ENCODE measurements at regions of chr6 and their contacts with region 1.

Region 1: DNA sequence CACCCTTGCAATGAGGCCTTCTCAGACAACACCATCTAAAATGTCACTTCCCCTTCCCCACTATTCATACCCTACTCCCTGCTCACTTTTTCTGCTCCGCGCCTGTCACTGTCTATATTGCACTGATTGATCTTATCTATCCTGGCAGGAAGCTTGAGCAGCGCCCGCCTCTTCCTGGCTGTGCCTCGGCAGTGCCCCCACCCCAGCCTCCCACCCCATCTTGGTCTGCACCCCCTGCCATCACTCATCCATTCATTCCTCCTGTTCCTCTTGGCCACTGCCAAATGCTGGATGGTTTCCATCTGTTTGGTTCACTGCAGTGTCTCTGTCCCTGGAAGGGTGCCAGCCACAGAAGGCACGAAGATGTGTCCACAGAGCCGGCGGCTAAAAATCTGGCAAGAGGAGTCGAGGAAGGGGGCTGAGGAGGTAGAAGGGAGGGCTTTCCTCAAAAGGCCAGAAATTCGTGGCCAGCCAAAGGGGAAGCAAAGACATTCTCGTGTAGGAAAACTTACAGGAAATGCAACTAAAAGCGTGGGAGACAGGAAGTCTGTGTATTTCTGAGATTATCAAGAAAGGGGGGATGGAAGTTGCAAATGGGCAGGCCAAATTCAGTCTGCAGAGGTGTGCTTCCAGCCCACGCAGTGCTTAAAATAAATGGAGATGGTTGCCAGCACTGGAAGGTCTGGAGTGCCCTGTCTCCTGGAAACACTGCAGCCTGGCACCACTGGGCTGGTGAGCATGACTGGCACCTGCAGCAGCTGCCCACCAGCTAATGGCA is 27.6 kb downstream of the SYNJ2 start:
- DNase-seq: no peak
- ATAC-seq: no peak
- H3K4me3 ChIP-seq: no peak overlapping the region
- H3K27ac ChIP-seq: peak overlapping the region; percentile 99
- H3K4me1 ChIP-seq: peaks cover 99% of the 10 kb centered on the region
- H3K27me3 ChIP-seq: no peaks in the 10 kb centered on the region
- CTCF ChIP-seq: no peak
- EP300 ChIP-seq: no peak
- POLR2A ChIP-seq: no peak
- RAD21 ChIP-seq: no peak

Region 2: GRCh38 chr6:157514659-157515496 is 494.4 kb before region 1 on chr6:
- CTCF ChIA-PET with region 1: no interaction called
- POLR2A ChIA-PET with region 1: no interaction called
- in situ Hi-C with region 1: no loop called
- intact Hi-C with region 1: no loop called
- DNase-seq: peak; percentile 75
- ATAC-seq: peak; percentile 61
- H3K4me3 ChIP-seq: no peak overlapping the region
- H3K27ac ChIP-seq: peak overlapping the region; percentile 22
- H3K4me1 ChIP-seq: peaks cover 83% of the 10 kb centered on the region
- H3K27me3 ChIP-seq: no peaks in the 10 kb centered on the region
- CTCF ChIP-seq: no peak
- EP300 ChIP-seq: peak in 1 of 2 experiments; percentile 53; a peak in 1 of 4 replicates
- POLR2A ChIP-seq: no peak
- RAD21 ChIP-seq: no peak

Region 3: DNA sequence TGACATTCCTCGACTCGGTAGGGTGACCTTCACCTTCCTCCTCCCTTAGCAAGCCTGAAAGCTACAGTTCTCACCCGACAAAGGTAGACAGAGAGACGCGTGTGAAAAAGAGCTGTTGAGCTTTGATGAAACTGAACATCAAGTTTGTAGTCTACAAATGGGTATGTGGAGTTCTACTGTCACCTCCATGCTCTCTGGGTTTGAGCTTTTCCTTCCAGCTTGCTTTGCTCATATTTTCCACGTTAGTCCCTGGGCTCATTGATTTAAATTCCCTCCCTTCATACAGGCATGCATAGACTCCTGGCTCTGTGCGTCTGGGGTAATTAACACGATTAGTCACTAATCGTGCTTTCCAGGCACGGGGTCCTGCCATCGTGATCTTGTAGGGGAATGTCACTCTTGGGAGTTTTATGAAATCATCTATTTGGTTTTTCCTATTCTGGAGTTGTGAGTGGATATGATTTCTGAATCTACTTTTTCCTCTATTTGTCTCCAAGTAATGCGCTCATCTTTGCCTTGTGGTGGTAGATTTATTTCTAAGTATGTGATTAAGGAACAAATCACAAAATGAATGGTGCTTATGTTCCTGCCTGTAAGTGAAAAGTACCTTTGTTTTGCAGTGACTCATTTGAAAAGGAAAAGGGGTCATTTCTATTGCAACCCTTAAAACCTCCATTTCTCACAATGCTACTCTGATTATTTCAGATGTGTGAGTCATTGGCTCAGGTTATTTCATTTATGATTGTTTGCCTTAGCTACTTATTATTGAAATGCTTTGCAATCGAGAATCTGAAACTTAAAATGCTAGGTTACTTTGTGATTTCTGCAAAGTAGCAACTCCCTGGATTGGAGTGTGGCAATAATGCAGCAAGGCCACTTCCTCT is 473.7 kb before region 1 on chr6:
- CTCF ChIA-PET with region 1: no interaction called
- POLR2A ChIA-PET with region 1: no interaction called
- in situ Hi-C with region 1: no loop called
- intact Hi-C with region 1: no loop called
- DNase-seq: peak; percentile 86
- ATAC-seq: no peak
- H3K4me3 ChIP-seq: peak overlapping the region in 2 of 3 experiments; percentile 19; a peak in 3 of 6 replicates
- H3K27ac ChIP-seq: peak overlapping the region; percentile 64
- H3K4me1 ChIP-seq: peaks cover 100% of the 10 kb centered on the region
- H3K27me3 ChIP-seq: no peaks in the 10 kb centered on the region
- CTCF ChIP-seq: no peak
- EP300 ChIP-seq: no peak
- POLR2A ChIP-seq: peak in 1 of 2 experiments; percentile 40; a peak in 1 of 4 replicates
- RAD21 ChIP-seq: no peak

Region 4: DNA sequence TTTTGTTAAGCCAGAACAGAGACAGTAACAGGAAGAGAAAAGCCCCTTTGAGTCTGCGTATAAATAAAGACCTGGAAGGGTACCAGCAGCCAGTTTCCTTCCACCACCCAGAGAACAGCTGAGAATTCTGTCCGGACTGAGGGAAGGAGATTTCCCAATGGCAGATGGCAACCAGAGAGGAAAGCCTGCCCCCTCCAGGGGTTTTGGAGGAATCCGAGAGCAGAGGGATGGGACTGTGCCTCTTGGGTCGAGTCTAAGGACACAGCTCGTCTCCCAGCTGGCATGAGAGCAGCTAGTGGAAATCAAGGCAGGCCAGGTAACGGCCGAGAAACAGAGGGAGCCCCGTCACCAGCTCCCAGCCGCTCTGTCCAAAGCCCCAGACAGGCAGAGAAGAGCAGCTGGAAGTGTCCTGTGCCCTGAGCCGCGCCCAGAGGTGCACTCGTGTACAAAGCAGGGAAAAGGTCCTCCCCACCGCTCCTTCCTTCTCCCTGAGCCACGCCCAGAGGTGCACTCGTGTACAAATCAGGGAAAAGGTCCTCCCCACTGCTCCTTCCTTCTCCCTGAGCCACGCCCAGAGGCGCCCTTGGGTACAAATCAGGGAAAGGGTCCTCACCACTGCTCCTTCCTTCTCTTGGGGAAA is 320.2 kb before region 1 on chr6:
- CTCF ChIA-PET with region 1: no interaction called
- POLR2A ChIA-PET with region 1: no interaction called
- in situ Hi-C with region 1: no loop called
- intact Hi-C with region 1: no loop called
- DNase-seq: no peak
- ATAC-seq: peak; percentile 53
- H3K4me3 ChIP-seq: 0 out of 6 replicates have a peak overlapping the region, but pooled peaks of 1 of the 3 experiments have one; percentile 6
- H3K27ac ChIP-seq: no peak overlapping the region
- H3K4me1 ChIP-seq: no peaks in the 10 kb centered on the region
- H3K27me3 ChIP-seq: peaks cover 5 to 48% of the 10 kb centered on the region in 2 experiments; a peak in 3 of 5 replicates
- CTCF ChIP-seq: peak; percentile 46
- EP300 ChIP-seq: no peak
- POLR2A ChIP-seq: no peak
- RAD21 ChIP-seq: no peak

Region 5: DNA sequence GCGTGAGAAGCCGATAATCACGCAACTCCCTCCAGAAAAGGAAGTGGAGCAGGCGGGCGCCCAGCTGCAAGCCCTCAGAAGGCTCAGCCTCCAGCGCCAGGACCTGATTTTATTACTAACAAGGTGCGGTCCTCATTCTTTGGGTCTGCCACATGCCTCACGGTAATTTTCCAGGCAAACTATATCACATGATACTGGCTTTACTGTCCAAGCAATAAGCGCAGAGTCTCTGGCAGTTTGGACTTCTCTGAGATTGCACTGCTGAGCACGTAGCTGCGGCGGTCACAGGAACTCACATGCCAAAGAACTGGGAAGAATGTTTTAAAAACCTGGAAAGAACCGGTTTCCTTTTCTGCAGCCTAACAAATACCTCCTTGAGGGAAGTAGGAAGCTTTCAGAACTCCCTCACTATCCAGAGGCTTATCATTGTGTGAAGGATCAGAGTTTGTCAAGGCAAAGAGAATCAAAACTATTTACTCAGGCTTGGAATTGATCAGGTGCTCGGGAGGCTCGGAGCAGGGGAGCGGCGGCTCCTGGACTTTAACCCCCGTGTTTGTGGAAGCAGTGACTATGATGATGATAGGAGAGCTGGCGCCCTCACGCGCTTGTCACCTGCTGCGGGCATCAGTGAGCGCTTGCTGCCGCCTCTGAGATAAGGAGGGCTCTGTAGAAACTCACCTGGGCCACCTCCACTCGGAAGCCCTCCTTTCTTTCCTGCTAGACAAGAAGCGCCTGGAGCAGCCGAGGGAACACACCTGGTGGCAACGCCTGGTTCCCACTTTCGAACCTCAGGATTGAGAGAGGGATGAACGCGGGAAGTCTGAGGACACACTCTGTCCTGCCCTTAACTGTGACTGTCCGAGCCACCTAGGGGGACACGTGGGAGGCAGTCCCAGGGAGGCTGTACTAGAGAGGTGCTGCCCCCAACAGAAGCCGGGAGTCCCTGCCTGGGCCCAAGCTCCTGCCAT is 54.9 kb before region 1 on chr6:
- CTCF ChIA-PET with region 1: no interaction called
- POLR2A ChIA-PET with region 1: interaction called, 36 read pairs
- in situ Hi-C with region 1: no loop called
- intact Hi-C with region 1: no loop called
- DNase-seq: peak; percentile 95
- ATAC-seq: peak; percentile 88
- H3K4me3 ChIP-seq: peak overlapping the region; percentile 49 to 72 (median 54)
- H3K27ac ChIP-seq: peak overlapping the region; percentile 87
- H3K4me1 ChIP-seq: peaks cover 50% of the 10 kb centered on the region
- H3K27me3 ChIP-seq: no peaks in the 10 kb centered on the region; a peak in 1 of 5 replicates
- CTCF ChIP-seq: peak; percentile 87
- EP300 ChIP-seq: peak in 1 of 2 experiments; percentile 86; a peak in 3 of 4 replicates
- POLR2A ChIP-seq: peak; percentile 33 to 74; a peak in 3 of 4 replicates
- RAD21 ChIP-seq: peak; percentile 80

Region 6: GRCh38 chr6:157994126-157994795 is 15.0 kb before region 1 on chr6:
- CTCF ChIA-PET with region 1: no interaction called
- POLR2A ChIA-PET with region 1: interaction called, 345 read pairs
- in situ Hi-C with region 1: no loop called
- intact Hi-C with region 1: no loop called
- DNase-seq: peak; percentile 69
- ATAC-seq: peak; percentile 8; the same call in 2 of the 3 replicates
- H3K4me3 ChIP-seq: no peak overlapping the region
- H3K27ac ChIP-seq: peak overlapping the region; percentile 49
- H3K4me1 ChIP-seq: peaks cover 96% of the 10 kb centered on the region
- H3K27me3 ChIP-seq: no peaks in the 10 kb centered on the region
- CTCF ChIP-seq: no peak
- EP300 ChIP-seq: no peak
- POLR2A ChIP-seq: no peak
- RAD21 ChIP-seq: no peak

Region 7: DNA sequence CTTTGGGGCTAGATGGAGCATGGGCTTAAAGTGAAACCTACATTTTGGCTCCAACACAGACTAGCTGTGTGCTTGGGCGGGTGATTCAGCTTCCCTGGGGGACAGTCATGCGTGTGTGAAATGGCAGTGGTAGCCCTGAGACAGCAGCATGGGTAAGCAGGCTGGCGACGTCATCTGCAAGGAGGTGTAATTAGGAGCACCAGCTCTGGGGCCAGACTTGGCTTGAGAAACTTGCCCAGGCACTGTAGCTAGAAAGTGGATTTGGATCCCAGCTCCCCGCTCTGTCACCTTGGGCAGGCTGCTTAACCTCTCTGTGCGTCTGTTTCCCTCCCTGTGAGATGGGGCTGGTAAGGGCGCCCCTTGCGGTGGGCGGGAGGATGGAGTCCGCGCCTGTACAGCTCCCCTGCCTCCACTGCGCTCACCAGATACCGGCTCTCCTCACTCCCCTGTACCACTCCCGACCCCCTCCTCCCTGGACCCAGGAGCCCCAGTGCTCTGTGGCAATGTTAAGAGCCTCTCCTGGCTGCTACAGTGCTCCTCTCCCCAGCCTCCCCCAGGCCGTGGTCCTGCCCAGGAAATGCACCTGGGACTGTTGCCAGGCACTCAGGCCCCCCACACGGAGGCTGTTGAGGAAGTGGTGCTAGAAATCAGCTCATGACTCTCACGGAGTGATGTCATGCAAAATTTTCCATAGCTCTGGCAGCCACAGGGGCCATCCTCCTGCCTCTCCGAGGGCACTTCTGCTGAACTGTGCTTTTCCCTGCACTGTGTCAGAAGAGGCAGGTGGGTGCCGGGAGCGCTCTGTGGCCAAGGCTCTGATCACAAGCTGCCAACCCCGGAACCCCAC is 17.0 kb after region 1 on chr6:
- CTCF ChIA-PET with region 1: no interaction called
- POLR2A ChIA-PET with region 1: interaction called, 75 read pairs
- in situ Hi-C with region 1: no loop called
- intact Hi-C with region 1: no loop called
- DNase-seq: peak; percentile 83
- ATAC-seq: peak; percentile 46
- H3K4me3 ChIP-seq: no peak overlapping the region
- H3K27ac ChIP-seq: peak overlapping the region; percentile 50
- H3K4me1 ChIP-seq: peaks cover 69% of the 10 kb centered on the region
- H3K27me3 ChIP-seq: no peaks in the 10 kb centered on the region
- CTCF ChIP-seq: peak; percentile 12; the same call in 1 of the 2 replicates
- EP300 ChIP-seq: peak in 1 of 2 experiments; percentile 66; a peak in 1 of 4 replicates
- POLR2A ChIP-seq: 0 out of 4 replicates have a peak, but pooled peaks of 1 of the 2 experiments have one; percentile 40
- RAD21 ChIP-seq: no peak

Region 8: GRCh38 chr6:158047127-158047518 is 37.8 kb after region 1 on chr6:
- CTCF ChIA-PET with region 1: no interaction called
- POLR2A ChIA-PET with region 1: interaction called, 65 read pairs
- in situ Hi-C with region 1: no loop called
- intact Hi-C with region 1: loop called (anchors 1 kb)
- DNase-seq: no peak
- ATAC-seq: no peak
- H3K4me3 ChIP-seq: no peak overlapping the region
- H3K27ac ChIP-seq: peak overlapping the region; percentile 5
- H3K4me1 ChIP-seq: peaks cover 79% of the 10 kb centered on the region
- H3K27me3 ChIP-seq: no peaks in the 10 kb centered on the region
- CTCF ChIP-seq: no peak
- EP300 ChIP-seq: no peak
- POLR2A ChIP-seq: no peak
- RAD21 ChIP-seq: no peak

Region 9: DNA sequence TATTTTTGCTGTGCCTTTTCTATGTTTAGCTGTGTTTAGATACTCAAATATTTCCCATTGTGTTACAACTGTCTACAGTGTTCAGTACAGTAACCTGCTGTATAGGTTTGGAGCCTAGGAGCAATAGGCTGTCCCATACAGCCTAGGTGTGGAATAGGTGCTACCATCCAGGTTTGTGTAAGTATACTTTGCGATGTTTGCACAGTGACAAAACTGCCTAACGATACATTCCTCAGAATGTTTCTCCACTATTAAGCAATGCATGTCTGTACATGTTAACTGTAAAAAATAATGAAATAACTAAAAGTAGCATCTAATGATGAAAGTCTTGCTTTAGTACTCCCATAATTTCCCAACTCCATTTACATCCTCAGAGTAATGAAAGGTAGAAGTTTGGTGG is 112.7 kb after region 1 on chr6:
- CTCF ChIA-PET with region 1: no interaction called
- POLR2A ChIA-PET with region 1: no interaction called
- in situ Hi-C with region 1: no loop called
- intact Hi-C with region 1: no loop called
- DNase-seq: peak; percentile 56
- ATAC-seq: peak; percentile 64
- H3K4me3 ChIP-seq: no peak overlapping the region
- H3K27ac ChIP-seq: no peak overlapping the region
- H3K4me1 ChIP-seq: peaks cover 10% of the 10 kb centered on the region
- H3K27me3 ChIP-seq: no peaks in the 10 kb centered on the region
- CTCF ChIP-seq: no peak
- EP300 ChIP-seq: no peak
- POLR2A ChIP-seq: no peak
- RAD21 ChIP-seq: no peak